ENCODE measurements at regions of chr2 and their contacts with region 1.

Region 1: GRCh38 chr2:163191372-163191771 is 352.8 kb upstream of the KCNH7 start:
- DNase-seq: peak; percentile 34
- H3K4me3 Mint-ChIP-seq: no peak overlapping the region
- H3K27ac Mint-ChIP-seq: no peak overlapping the region
- H3K4me1 Mint-ChIP-seq: no peaks in the 10 kb centered on the region
- H3K27me3 Mint-ChIP-seq: no peaks in the 10 kb centered on the region
- CTCF ChIP-seq: peak; percentile 53

Region 2: GRCh38 chr2:163207693-163208370 is 16.5 kb after region 1 on chr2:
- CTCF ChIA-PET with region 1: no interaction called
- intact Hi-C with region 1: no loop called
- DNase-seq: no peak
- H3K4me3 Mint-ChIP-seq: no peak overlapping the region
- H3K27ac Mint-ChIP-seq: no peak overlapping the region
- H3K4me1 Mint-ChIP-seq: peaks cover 11% of the 10 kb centered on the region
- H3K27me3 Mint-ChIP-seq: no peaks in the 10 kb centered on the region
- CTCF ChIP-seq: no peak

Region 3: DNA sequence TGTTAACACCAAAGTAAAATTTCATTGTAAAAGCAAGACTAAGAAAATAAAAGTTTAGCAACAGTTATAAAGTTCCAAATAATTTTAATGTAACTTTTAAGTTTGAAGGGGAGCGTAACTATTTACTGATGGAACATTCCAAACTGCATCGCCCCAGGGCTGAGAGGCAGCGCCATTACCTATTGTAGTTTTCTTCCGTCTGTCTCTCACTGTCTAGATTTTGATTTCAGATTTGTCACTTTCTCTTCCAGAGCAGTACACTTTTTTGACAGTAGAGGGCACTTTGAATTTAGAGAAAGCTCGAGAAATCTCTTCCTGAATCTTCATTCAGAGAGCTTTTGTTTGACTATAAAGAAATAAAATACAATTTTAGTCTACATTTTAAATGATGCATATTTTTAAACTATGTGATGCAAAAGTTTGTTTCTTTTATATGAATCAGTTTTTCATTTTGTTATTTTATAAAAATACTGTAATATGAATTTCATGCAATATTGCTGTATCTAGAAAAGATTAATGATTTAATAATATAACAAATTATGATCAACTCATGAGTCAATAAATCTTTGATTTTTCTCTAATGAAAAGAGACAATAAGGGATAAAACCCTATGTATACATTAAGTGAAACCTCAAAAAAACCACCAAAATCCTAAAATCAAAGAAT is 154.7 kb after region 1 on chr2:
- CTCF ChIA-PET with region 1: no interaction called
- intact Hi-C with region 1: loop called (anchors 5 kb)
- DNase-seq: peak; percentile 33
- H3K4me3 Mint-ChIP-seq: no peak overlapping the region
- H3K27ac Mint-ChIP-seq: no peak overlapping the region
- H3K4me1 Mint-ChIP-seq: peaks cover 10% of the 10 kb centered on the region
- H3K27me3 Mint-ChIP-seq: no peaks in the 10 kb centered on the region
- CTCF ChIP-seq: peak; percentile 58

Region 4: DNA sequence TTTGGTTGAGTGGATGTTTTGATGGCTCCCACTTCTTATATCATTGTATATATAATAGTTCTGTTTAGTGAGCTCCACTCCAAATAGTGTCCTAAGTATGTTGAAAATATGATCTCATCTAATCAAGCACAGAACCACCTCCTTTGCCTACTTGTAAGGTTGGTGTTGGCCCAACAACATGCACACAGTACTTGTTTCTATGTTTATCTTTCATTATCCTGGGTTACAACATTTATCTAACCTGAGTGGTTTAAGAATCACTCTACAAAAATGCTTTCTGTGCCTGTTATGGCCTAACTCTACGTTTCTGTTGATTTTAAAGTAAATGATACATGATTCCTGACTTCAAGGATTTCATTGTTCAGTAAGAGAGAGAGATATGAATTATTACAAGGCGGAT is 262.5 kb after region 1 on chr2:
- CTCF ChIA-PET with region 1: no interaction called
- intact Hi-C with region 1: loop called (anchors 5 kb)
- DNase-seq: no peak
- H3K4me3 Mint-ChIP-seq: no peak overlapping the region
- H3K27ac Mint-ChIP-seq: no peak overlapping the region
- H3K4me1 Mint-ChIP-seq: peaks cover 9% of the 10 kb centered on the region
- H3K27me3 Mint-ChIP-seq: no peaks in the 10 kb centered on the region
- CTCF ChIP-seq: no peak

Region 5: GRCh38 chr2:163610817-163611556 is 419.6 kb after region 1 on chr2:
- CTCF ChIA-PET with region 1: no interaction called
- intact Hi-C with region 1: loop called (anchors 5 kb)
- DNase-seq: peak; percentile 43
- H3K4me3 Mint-ChIP-seq: no peak overlapping the region
- H3K27ac Mint-ChIP-seq: no peak overlapping the region
- H3K4me1 Mint-ChIP-seq: peaks cover 7% of the 10 kb centered on the region
- H3K27me3 Mint-ChIP-seq: no peaks in the 10 kb centered on the region
- CTCF ChIP-seq: no peak

Region 6: DNA sequence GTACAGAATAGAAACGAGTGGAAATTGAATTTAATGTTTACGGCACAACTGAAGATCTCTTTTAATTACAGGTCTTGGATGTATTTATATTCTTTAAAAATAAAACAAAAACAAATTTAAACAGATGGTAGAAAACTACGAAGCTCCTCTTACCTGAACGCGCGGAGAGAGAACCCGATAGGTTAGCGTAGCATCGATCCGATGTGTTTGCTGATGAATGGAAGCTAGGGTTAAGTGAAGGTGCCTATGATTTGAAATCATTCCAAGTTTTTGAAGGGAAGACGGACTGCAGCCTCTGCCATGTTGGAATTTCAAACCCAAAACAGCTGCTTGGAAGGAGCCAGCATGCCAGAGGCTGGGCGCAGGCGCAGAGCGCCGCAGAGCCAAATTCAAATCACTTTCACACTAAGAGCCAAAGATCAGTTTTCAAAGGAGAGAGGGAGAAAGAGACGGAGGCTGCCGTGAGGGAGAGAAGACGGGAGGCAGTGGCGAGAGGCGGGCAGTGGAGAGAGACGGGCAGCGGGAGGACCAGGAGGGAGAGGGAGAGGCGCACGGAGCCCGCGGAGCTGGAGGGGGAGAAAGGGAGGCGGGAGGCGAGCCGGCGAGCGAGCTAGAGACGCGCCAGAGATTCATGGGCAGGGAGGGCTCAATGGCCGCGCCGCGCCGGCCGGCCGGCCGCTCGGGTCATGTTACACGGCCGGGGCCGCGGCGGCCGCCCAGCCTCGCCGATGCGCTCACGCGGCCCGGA is 544.5 kb after region 1 on chr2 and contains the start of gene FIGN:
- CTCF ChIA-PET with region 1: no interaction called
- intact Hi-C with region 1: loop called (anchors 10 kb)
- DNase-seq: peak; percentile 65
- H3K4me3 Mint-ChIP-seq: peak within 1 kb of the TSS; percentile 87
- H3K27ac Mint-ChIP-seq: peak within 1 kb of the TSS; percentile 94
- H3K4me1 Mint-ChIP-seq: peaks cover 16% of the 10 kb centered on the region
- H3K27me3 Mint-ChIP-seq: no peaks in the 10 kb centered on the region
- CTCF ChIP-seq: no peak
- total RNA-seq, gene FIGN: 8.4 and 9.1 TPM in 2 replicates

Region 7: DNA sequence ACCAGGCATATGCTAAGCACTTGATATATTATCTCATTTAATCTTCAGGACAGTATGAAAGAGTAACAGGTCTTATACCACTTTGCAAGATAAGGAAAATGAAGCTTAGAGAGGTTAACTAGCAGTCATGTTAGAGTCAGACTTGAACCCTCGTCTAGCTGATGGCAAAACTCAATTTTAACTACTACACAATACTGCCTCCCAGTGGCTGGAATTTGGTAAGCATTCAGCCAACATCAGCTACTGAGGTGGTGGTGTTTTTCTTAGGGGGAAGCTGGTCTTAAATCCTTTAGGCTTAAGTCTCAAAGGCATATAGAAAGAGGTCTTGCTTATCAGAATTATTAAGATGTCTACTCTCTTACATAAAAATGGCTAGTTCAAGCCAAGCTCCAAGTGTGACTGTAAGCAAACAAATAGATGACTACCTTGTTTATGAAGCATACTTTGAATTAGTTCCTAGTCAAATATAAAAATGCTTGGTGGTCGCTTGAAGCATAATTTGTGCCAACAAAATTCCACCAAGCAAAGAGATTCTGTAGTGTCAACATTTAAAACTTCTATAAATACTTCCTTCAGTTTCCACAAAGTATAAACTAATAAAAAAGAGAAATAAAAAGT is 869.9 kb after region 1 on chr2:
- CTCF ChIA-PET with region 1: no interaction called
- intact Hi-C with region 1: loop called (anchors 5 kb)
- DNase-seq: peak; percentile 66
- H3K4me3 Mint-ChIP-seq: no peak overlapping the region
- H3K27ac Mint-ChIP-seq: no peak overlapping the region
- H3K4me1 Mint-ChIP-seq: no peaks in the 10 kb centered on the region
- H3K27me3 Mint-ChIP-seq: no peaks in the 10 kb centered on the region
- CTCF ChIP-seq: no peak

Region 8: DNA sequence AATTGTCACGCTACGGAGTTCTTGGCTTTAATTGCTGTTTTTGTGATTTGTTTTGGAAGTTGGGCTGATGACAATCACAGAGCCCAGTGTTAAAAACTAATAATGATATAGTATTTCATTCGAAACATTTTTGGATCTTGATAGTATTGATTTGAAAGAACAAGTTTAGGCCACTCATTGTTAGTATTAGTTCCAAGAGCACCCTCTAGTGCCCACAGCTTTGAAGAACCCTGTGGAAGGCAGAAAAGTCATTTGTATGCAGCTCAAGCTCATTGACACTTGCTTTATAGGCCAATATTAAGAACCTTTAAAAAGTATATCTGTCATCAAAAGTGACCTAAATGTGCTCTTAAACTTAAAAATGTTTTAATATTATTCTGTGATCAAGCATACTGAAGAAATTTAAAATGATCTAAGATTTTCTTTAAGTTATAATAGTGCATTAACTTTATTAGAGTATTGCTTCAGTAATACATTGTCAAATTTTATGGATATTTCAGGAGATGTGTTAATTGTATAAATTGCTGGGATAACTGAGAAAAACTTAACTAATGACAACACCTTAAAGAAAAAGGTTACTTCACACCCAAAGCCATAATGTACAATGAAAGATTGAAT is 1238.9 kb after region 1 on chr2:
- CTCF ChIA-PET with region 1: interaction called, 5 read pairs
- intact Hi-C with region 1: loop called (anchors 2 kb)
- DNase-seq: peak; percentile 51
- H3K4me3 Mint-ChIP-seq: no peak overlapping the region
- H3K27ac Mint-ChIP-seq: no peak overlapping the region
- H3K4me1 Mint-ChIP-seq: no peaks in the 10 kb centered on the region
- H3K27me3 Mint-ChIP-seq: no peaks in the 10 kb centered on the region
- CTCF ChIP-seq: peak; percentile 43

Measured in Calu3 (cell line).